ENCODE measurements at regions of chr2 and their contacts with region 1.

Region 1: DNA sequence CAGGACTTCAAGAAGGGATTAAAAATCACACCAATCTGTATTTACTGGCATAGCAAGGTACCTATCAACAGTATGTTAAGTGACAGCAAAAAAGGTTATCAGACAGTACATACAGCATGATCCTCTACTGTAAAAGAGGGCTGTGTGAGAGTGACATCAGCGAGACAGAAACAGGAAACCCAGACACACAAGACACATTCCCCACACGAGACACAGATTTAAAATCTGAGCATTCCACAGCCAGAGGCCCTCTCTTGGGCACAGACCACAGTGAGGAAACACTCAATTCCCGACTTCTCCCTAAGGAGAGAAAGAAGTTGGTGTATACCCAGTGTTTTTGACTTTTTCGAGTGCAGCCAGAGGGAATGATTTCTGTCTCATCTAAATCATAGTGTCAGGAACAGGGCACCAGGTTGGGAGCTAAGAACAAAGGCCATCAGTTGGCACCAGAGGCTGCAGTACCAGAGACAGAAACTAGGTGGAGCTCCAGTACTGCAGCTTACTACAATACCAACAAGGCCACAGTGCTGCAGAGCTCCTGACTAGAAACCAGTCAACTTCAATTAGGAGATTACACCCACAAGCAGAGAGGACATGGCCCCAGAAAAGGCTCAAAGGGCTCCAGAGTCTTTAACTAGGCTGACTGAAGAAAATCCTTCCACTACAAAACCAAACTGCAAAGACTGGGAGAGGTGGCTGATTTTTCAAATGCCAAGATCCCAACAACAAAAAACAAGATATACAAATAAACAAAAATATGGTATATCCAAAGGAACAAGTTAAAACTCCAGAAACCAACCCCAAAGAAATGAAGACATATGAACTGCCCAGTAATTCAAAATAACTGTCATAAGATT is 41.0 kb downstream of the UNC50 start:
- DNase-seq: peak; percentile 59 to 61
- ATAC-seq: peak; percentile 91 to 97 (median 96)
- H3K4me3 ChIP-seq: no peak overlapping the region
- H3K27ac ChIP-seq: no peak overlapping the region
- H3K4me1 ChIP-seq: no peaks in the 10 kb centered on the region
- H3K27me3 ChIP-seq: no peaks in the 10 kb centered on the region
- CTCF ChIP-seq: peak; percentile 100

Region 2: GRCh38 chr2:98835831-98836385 is 186.5 kb after region 1 on chr2:
- intact Hi-C with region 1: loop called (anchors 2 kb)
- DNase-seq: no peak
- ATAC-seq: no peak
- H3K4me3 ChIP-seq: no peak overlapping the region
- H3K27ac ChIP-seq: no peak overlapping the region
- H3K4me1 ChIP-seq: no peaks in the 10 kb centered on the region
- H3K27me3 ChIP-seq: no peaks in the 10 kb centered on the region
- CTCF ChIP-seq: no peak

Region 3: DNA sequence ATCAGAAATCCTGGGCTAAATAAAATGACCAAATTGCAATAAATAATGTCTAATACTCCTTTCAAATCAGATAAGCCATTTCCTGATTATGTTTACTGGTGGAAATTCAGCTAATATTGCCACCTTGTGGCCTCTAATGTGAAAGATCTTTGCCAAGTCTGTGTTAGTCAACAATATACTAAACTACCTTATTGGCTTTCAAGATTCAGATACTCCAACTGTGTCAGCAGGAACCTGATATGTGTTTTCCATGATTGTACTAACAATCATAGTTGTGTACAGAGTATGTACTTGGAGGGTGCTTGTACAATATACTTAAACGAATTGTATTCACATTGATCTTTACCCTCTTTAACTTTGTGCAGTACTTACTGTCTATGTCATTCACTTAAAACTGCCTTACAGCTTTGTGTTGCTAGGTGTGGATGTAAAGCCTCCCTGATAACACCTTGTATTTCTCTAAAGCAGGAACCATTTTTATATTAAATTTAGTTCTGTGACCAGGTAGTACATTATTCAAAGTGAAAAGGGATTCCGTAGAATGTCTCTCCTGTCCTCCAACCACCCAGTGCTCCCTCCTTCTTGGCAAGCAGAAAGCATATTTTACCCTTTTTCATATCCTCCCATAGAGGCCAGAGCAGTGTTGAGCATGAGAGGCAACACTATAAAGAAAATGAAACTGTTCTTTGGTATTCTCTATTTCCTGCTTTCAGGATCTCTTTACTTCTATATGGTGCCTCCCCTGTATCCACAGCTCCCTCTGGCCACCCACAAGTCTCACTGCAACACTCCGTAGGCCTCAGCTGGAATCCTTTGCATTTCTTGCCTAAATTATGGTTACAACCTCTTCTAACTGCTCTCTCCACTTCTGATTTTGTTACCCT is 417.0 kb after region 1 on chr2:
- intact Hi-C with region 1: loop called (anchors 2 to 5 kb)
- DNase-seq: no peak
- ATAC-seq: peak in 2 of 4 donors; percentile 27 to 62
- H3K4me3 ChIP-seq: no peak overlapping the region
- H3K27ac ChIP-seq: no peak overlapping the region
- H3K4me1 ChIP-seq: no peaks in the 10 kb centered on the region
- H3K27me3 ChIP-seq: no peaks in the 10 kb centered on the region
- CTCF ChIP-seq: peak; percentile 49